HAP-1 (cell line): ENCODE measurements at regions of chr1 and their contacts with region 1.

Region 1: GRCh38 chr1:159197561-159198557 is 6.8 kb upstream of the ACKR1 start:
- DNase-seq: peak; percentile 20 to 77
- H3K4me3 ChIP-seq: no peak overlapping the region
- H3K4me1 ChIP-seq: no peaks in the 10 kb centered on the region
- H3K27me3 ChIP-seq: no peaks in the 10 kb centered on the region

Region 2: GRCh38 chr1:159161001-159161718 is 36.7 kb before region 1 on chr1:
- in situ Hi-C with region 1: loop called (anchors 5 kb)
- DNase-seq: peak; percentile 63 to 79
- H3K4me3 ChIP-seq: no peak overlapping the region
- H3K4me1 ChIP-seq: no peaks in the 10 kb centered on the region
- H3K27me3 ChIP-seq: peaks cover 5% of the 10 kb centered on the region; the same call in 1 of the 2 replicates